Panc1 (cell line): ENCODE measurements at regions of chr12 and their contacts with region 1.

Region 1: GRCh38 chr12:109421355-109422087 is 55.6 kb downstream of the KCTD10 start:
- DNase-seq: no peak
- ATAC-seq: no peak
- H3K4me3 ChIP-seq: no peak overlapping the region
- H3K27ac ChIP-seq: no peak overlapping the region
- H3K4me1 ChIP-seq: no peaks in the 10 kb centered on the region
- H3K27me3 ChIP-seq: no peaks in the 10 kb centered on the region
- CTCF ChIP-seq: no peak

Region 2: GRCh38 chr12:109358154-109358869 is 63.2 kb before region 1 on chr12:
- CTCF ChIA-PET with region 1: no interaction called
- POLR2A ChIA-PET with region 1: interaction called, 14 read pairs
- in situ Hi-C with region 1: no loop called
- intact Hi-C with region 1: no loop called
- DNase-seq: no peak
- ATAC-seq: no peak
- H3K4me3 ChIP-seq: peak overlapping the region; percentile 1 to 21; a peak in 3 of 4 replicates
- H3K27ac ChIP-seq: no peak overlapping the region
- H3K4me1 ChIP-seq: no peaks in the 10 kb centered on the region
- H3K27me3 ChIP-seq: peaks cover 17% of the 10 kb centered on the region
- CTCF ChIP-seq: no peak